ENCODE measurements at regions of chr10 and their contacts with region 1.

Region 1: DNA sequence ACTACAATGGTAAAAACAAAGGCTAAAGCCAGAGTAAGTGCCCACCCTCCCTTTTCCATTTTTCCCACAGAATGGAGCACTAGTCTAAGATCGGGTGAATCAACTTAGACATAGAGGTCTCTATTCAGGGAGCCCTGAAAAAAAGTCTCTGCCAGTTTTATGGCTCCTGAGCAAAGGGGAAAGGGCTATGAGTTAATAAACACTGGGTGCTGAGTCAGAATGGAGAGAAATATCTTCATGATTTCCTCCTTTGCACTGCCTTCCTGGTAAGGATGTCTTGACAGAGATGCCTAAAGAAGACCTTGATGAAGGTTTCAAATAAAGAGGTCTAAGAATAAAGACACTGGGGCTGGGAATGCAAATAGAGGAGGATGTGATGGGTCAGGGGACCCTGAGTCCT is 607.4 kb upstream of the MBL2 start:
- DNase-seq: no peak
- ATAC-seq: no peak
- H3K4me3 ChIP-seq: no peak overlapping the region
- H3K4me3 Mint-ChIP-seq: no peak overlapping the region
- H3K27ac ChIP-seq: no peak overlapping the region
- H3K27ac Mint-ChIP-seq: no peak overlapping the region
- H3K4me1 ChIP-seq: no peaks in the 10 kb centered on the region
- H3K4me1 Mint-ChIP-seq: no peaks in the 10 kb centered on the region
- H3K27me3 ChIP-seq: no peaks in the 10 kb centered on the region
- H3K27me3 Mint-ChIP-seq: no peaks in the 10 kb centered on the region
- CTCF ChIP-seq: no peak

Region 2: DNA sequence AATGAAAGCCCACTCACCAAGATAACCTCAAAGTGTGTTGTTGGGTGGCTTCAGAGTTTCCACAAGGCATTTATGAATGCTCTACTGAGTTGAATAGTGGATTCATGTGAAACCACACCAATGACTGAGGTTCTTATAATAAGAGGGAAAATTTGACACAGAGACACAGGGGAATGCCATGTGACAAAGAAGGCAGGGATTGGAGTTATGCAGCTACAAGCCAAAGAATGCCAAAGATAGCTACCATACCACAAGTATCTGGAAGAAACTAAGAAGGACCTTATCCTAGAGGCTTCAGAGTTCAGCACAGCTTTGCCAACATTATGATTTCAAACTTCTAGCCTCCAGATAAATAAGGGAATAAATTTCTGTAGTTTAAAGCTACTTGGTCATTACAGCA is 1489.1 kb after region 1 on chr10:
- CTCF ChIA-PET with region 1: no interaction called
- POLR2A ChIA-PET with region 1: no interaction called
- intact Hi-C with region 1: loop called in 1 of 2 experiments (anchors 5 kb)
- DNase-seq: no peak
- ATAC-seq: no peak
- H3K4me3 ChIP-seq: no peak overlapping the region
- H3K4me3 Mint-ChIP-seq: no peak overlapping the region
- H3K27ac ChIP-seq: no peak overlapping the region
- H3K27ac Mint-ChIP-seq: no peak overlapping the region
- H3K4me1 ChIP-seq: no peaks in the 10 kb centered on the region
- H3K4me1 Mint-ChIP-seq: no peaks in the 10 kb centered on the region
- H3K27me3 ChIP-seq: no peaks in the 10 kb centered on the region
- H3K27me3 Mint-ChIP-seq: no peaks in the 10 kb centered on the region
- CTCF ChIP-seq: no peak